MCF 10A (cell line): ENCODE measurements at regions of chr11 and their contacts with region 1.

Region 1: DNA sequence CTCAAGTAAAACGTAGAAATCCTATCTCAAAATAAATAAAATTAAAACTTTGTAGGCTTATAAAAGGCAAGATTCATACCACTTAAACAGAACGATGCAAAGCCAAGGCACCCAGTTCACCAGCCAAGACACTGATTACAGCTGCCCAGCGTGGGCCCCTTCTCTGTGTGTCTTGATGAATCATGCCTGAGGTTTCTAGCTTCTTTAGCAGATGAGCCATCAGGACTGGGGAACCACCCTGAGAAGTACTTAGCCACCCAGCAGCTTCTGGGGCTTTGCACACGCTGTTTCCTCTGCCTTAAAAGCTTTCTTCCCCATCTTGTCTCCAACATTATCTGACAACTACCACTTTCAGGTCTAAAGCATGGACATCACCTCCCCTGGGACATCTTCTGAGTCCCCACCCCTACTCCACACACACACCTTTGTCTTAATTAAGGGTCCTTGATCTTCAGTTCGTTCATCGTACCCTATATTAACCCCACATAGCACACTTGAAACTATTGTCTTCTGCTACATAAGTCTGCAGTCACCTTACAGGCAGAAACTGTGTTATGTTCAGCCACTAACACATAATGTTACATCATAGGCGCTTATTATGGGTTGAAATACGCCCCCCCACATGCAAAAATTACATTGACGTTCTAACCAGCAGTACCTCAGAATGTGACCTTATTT is 8.7 kb upstream of the LAYN start:
- DNase-seq: peak; percentile 86
- H3K4me3 Mint-ChIP-seq: no peak overlapping the region
- H3K27ac Mint-ChIP-seq: no peak overlapping the region
- H3K4me1 Mint-ChIP-seq: peaks cover 14% of the 10 kb centered on the region
- H3K27me3 Mint-ChIP-seq: no peaks in the 10 kb centered on the region
- CTCF ChIP-seq: no peak

Region 2: DNA sequence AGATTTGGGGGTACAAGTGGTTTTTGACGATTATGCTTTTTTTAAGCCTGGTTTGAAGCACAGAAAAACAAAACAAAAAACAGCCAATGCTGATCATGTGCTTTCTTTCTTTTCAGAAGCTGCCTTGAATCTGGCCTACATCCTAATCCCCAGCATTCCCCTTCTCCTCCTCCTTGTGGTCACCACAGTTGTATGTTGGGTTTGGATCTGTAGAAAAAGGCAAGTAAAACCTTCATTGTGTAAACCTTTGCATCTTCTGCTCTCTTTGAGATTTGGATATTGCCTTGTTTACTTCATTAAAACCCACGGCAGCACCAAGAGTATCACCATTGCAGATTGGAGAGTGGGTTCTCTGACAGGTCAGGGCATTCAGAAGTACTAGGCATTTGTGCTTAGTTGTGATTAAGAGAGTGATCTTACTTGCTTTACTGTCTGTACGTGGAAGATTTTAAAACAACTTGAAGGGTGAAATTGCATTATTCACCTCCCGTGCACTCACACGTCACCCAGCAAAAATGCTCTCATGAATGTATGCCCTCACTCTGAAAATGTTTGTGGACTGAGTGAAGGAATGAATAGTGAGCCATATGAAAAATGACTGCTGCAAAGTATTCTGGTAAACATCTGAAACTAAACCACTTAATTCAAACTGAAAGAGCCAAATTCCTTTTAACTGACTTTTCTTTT is 25.7 kb after region 1 on chr11:
- CTCF ChIA-PET with region 1: interaction called, 3 read pairs
- POLR2A ChIA-PET with region 1: interaction called, 14 read pairs
- intact Hi-C with region 1: no loop called
- DNase-seq: peak; percentile 20
- H3K4me3 Mint-ChIP-seq: no peak overlapping the region
- H3K27ac Mint-ChIP-seq: peak overlapping the region; percentile 83
- H3K4me1 Mint-ChIP-seq: peaks cover 31% of the 10 kb centered on the region
- H3K27me3 Mint-ChIP-seq: no peaks in the 10 kb centered on the region
- CTCF ChIP-seq: no peak